ENCODE measurements at regions of chr17 and their contacts with region 1.

Region 1: DNA sequence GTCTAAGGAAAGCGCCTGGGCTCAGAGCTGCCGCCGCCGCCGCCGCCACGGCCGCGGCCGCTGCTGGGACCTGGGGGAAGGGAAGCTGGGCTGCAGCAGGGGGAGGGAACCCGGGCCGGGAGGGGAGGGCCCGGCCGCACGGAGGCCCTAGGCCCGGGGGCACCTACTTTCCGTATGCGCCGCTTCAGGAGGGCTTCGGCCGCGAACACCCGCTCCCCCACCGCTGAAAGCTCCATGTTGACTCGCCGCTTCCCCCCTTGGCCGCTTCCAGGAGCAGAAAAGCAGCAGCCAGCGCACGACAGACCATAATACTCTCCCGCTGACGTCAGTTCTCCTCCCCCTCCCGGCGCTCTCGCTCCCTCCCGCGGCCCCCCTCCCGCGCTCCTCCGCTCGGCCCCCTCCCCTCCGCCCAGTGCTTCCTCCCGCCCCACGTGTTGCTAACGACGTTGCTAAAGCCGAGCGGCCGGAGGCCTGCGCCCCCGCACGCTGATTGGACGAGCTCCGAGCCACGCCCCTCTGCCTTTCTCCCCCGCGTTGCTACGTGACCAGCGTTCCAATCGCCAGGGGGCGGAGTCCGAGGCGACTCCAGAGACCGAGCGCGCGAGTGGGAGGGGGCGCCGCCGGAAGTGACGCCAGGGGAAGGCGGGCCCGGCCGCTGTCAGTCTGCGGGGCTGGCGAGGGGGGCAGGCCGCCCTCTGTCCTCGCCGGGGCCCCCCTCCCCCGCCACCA is at the start of gene CBX8:
- DNase-seq: peak; percentile 98 to 100 (median 99)
- ATAC-seq: peak; percentile 87
- H3K4me3 ChIP-seq: peak within 1 kb of the TSS; percentile 51 to 68
- H3K4me3 Mint-ChIP-seq: peak within 1 kb of the TSS; percentile 86
- H3K27ac ChIP-seq: peak within 1 kb of the TSS; percentile 60 to 72
- H3K27ac Mint-ChIP-seq: peak within 1 kb of the TSS; percentile 91
- H3K4me1 ChIP-seq: peaks cover 48% of the 10 kb centered on the region
- H3K4me1 Mint-ChIP-seq: peaks cover 38% of the 10 kb centered on the region
- H3K27me3 ChIP-seq: peaks cover 47 to 48% of the 10 kb centered on the region in 2 experiments
- H3K27me3 Mint-ChIP-seq: peaks cover 37% of the 10 kb centered on the region
- CTCF ChIP-seq: no peak
- total RNA-seq, gene CBX8: 3.7 to 4.0 TPM

Region 2: GRCh38 chr17:79777894-79778503 is 18.9 kb before region 1 on chr17 and contains the start of gene CBX2:
- CTCF ChIA-PET with region 1: no interaction called
- POLR2A ChIA-PET with region 1: interaction called, 4 read pairs
- intact Hi-C with region 1: loop called (anchors 2 kb)
- DNase-seq: peak; percentile 60 to 89 (median 75)
- ATAC-seq: peak; percentile 86
- H3K4me3 ChIP-seq: peak within 1 kb of the TSS; percentile 36 to 44
- H3K4me3 Mint-ChIP-seq: peak within 1 kb of the TSS; percentile 83
- H3K27ac ChIP-seq: no peak within 1 kb of the TSS
- H3K27ac Mint-ChIP-seq: no peak within 1 kb of the TSS
- H3K4me1 ChIP-seq: peaks cover 34% of the 10 kb centered on the region
- H3K4me1 Mint-ChIP-seq: peaks cover 34% of the 10 kb centered on the region
- H3K27me3 ChIP-seq: peaks cover 20 to 21% of the 10 kb centered on the region in 2 experiments
- H3K27me3 Mint-ChIP-seq: peaks cover 45% of the 10 kb centered on the region
- CTCF ChIP-seq: no peak
- total RNA-seq, gene CBX2: 0.14 to 0.56 TPM

Region 3: DNA sequence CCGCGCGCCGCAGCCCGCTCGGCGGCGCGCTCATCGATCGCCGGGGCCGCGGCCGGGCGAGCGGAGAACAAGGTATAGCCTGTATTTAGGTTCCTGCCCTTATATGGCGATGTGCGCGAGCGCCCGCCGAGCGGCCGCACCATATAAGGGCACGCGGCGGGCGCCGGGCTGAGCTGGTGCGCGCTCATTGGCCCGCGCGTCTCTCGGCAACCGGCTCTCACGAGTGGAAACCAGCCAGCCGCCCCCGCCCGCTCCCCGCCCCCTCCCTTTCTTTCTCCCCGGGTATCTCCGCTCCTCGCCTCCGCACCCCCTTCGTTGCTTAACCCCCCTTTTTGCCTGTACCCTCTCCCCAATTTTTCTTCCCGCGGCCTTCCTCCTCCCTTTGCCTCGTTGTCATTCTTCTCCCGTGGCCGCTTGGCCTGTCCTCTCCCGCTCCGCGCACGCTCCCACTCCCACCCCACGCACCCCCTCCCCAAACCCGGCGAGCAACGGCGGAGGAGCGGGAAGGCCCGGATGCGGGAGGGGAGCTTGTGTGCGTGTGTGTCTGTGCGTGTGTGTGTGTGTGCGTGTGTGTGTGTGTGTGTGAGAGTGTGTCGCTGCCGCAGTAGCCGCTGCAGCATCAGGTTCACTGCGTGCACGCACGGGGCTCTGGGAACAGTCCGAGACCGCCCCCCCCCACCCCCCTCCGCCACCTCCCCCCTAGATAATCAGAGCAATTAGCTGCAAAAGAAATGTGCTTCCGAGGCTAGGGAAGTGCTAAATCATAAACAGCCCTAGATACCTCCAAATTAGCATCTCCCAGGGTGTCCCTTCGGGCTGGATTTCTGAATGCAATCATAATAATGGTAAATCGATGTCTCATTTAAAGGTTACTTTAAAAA is 13.4 kb after region 1 on chr17:
- CTCF ChIA-PET with region 1: interaction called, 7 read pairs
- POLR2A ChIA-PET with region 1: interaction called, 18 read pairs
- intact Hi-C with region 1: loop called in 1 of 2 experiments (anchors 1 kb)
- DNase-seq: peak; percentile 48 to 91 (median 74)
- ATAC-seq: peak; percentile 91
- H3K4me3 ChIP-seq: no peak overlapping the region
- H3K4me3 Mint-ChIP-seq: no peak overlapping the region
- H3K27ac ChIP-seq: no peak overlapping the region
- H3K27ac Mint-ChIP-seq: no peak overlapping the region
- H3K4me1 ChIP-seq: peaks cover 40% of the 10 kb centered on the region
- H3K4me1 Mint-ChIP-seq: peaks cover 28% of the 10 kb centered on the region
- H3K27me3 ChIP-seq: peaks cover 75 to 82% of the 10 kb centered on the region in 2 experiments
- H3K27me3 Mint-ChIP-seq: peaks cover 67% of the 10 kb centered on the region
- CTCF ChIP-seq: no peak

Region 4: GRCh38 chr17:79997011-79997660 is 200.2 kb after region 1 on chr17:
- CTCF ChIA-PET with region 1: interaction called, 4 read pairs
- POLR2A ChIA-PET with region 1: interaction called, 8 read pairs
- intact Hi-C with region 1: loop called (anchors 2 kb)
- DNase-seq: peak; percentile 59 to 97 (median 77)
- ATAC-seq: peak; percentile 94
- H3K4me3 ChIP-seq: peak overlapping the region; percentile 35 to 42
- H3K4me3 Mint-ChIP-seq: peak overlapping the region; percentile 75
- H3K27ac ChIP-seq: peak overlapping the region; percentile 63 to 88
- H3K27ac Mint-ChIP-seq: peak overlapping the region; percentile 94
- H3K4me1 ChIP-seq: peaks cover 50% of the 10 kb centered on the region
- H3K4me1 Mint-ChIP-seq: peaks cover 50% of the 10 kb centered on the region
- H3K27me3 ChIP-seq: peaks cover 0 to 6% of the 10 kb centered on the region in 2 experiments
- H3K27me3 Mint-ChIP-seq: no peaks in the 10 kb centered on the region
- CTCF ChIP-seq: no peak